PC-9 (cell line): ENCODE measurements at regions of chr3 and their contacts with region 1.

Region 1: DNA sequence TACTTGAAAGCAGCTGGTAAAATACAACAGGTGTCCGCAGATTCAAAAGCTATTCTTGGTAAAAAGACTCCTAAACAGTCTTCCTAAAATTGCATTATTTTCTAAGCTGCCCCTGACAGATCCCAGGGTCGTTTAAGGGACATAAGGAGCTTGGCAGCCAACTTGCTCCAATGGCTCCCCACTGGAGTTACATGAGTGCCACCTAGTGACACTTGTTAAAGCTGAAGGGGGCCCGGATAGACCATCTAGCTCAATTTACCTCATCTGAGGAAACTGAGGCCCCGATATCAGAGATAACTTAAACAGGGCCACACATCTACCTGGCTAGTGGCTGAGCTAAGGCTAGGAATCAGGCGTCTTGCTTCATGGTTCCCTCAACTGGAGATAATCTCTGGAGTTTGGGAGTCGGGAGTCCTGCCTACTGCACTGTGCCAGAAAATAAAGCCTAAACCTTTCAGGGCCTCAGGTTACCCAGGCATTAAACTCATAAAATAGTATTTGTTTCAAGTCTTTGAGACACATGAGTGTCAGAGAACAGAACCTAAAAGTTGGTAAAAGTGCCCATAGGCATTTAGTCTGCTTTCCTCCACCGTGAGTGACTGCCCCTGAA is 6.5 kb upstream of the TBC1D23 start:
- DNase-seq: peak; percentile 53 to 67
- H3K4me3 ChIP-seq: no peak overlapping the region
- H3K27ac ChIP-seq: no peak overlapping the region
- H3K4me1 ChIP-seq: peaks cover 10% of the 10 kb centered on the region
- H3K27me3 ChIP-seq: no peaks in the 10 kb centered on the region
- CTCF ChIP-seq: peak; percentile 93

Region 2: DNA sequence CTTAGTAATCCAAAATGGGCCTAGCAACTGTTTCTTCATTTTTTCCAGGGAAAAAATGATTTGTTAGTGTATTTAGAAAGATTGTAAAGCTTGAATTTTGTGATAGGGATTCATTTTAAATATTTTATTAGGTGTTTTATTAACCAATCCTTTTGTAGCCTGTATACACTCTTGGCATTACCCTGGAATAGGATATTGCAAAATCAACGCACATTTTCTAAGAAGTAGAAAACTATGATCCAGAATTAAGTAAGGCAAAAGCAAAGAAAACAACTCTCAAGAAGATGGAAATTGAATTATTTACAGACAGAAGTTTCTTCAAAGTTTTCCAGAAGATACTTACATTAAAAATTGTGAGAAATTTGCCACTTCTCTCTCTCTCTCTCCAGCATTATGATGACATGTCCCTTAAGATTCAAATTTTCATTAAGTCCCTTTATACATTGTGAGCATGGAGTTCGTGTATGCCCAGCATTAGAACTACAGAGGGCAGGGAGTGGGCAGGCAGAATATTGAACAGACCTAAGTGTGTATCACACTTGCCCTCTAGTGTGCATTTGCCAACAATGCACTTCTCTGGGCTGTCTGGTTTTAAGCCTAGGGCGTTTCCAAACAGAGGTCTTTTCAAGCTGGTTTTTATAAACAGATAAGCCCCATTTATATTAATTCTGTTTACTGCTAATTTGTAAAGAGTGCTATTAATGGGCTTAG is 465.1 kb before region 1 on chr3:
- CTCF ChIA-PET with region 1: interaction called, 10 read pairs
- POLR2A ChIA-PET with region 1: no interaction called
- intact Hi-C with region 1: no loop called
- DNase-seq: peak; percentile 34 to 46
- H3K4me3 ChIP-seq: no peak overlapping the region
- H3K27ac ChIP-seq: no peak overlapping the region
- H3K4me1 ChIP-seq: no peaks in the 10 kb centered on the region
- H3K27me3 ChIP-seq: no peaks in the 10 kb centered on the region
- CTCF ChIP-seq: peak; percentile 89

Region 3: GRCh38 chr3:100002599-100003350 is 251.5 kb before region 1 on chr3:
- CTCF ChIA-PET with region 1: interaction called, 6 read pairs
- POLR2A ChIA-PET with region 1: no interaction called
- intact Hi-C with region 1: loop called (anchors 2 kb)
- DNase-seq: peak; percentile 79 to 100
- H3K4me3 ChIP-seq: no peak overlapping the region
- H3K27ac ChIP-seq: peak overlapping the region; percentile 60
- H3K4me1 ChIP-seq: peaks cover 57% of the 10 kb centered on the region
- H3K27me3 ChIP-seq: no peaks in the 10 kb centered on the region
- CTCF ChIP-seq: no peak

Region 4: DNA sequence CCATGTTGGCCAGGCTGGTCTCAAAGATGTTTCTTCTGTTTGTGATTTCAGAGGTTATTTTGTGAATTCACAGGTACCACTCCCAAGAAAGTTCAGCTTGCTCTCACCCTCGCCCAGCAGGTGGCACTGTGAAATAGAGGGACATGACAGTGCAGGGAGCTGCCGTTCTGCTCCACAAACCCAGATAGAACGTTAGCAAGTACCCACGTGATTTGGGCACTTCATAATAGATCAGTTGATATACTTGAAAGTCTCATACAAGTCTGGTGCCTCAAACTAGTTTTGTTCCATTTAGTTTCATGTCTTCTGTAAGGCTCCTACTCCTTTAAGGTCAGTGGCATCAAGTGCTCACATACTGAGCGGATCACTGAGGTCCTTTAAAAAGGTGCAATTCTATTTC is 185.4 kb before region 1 on chr3:
- CTCF ChIA-PET with region 1: interaction called, 45 read pairs
- POLR2A ChIA-PET with region 1: no interaction called
- intact Hi-C with region 1: loop called (anchors 1 kb)
- DNase-seq: peak; percentile 46 to 73
- H3K4me3 ChIP-seq: no peak overlapping the region
- H3K27ac ChIP-seq: no peak overlapping the region
- H3K4me1 ChIP-seq: no peaks in the 10 kb centered on the region
- H3K27me3 ChIP-seq: no peaks in the 10 kb centered on the region
- CTCF ChIP-seq: peak; percentile 81

Region 5: GRCh38 chr3:100184948-100185570 is 69.2 kb before region 1 on chr3:
- CTCF ChIA-PET with region 1: interaction called, 10 read pairs
- POLR2A ChIA-PET with region 1: no interaction called
- intact Hi-C with region 1: loop called (anchors 10 kb)
- DNase-seq: no peak
- H3K4me3 ChIP-seq: no peak overlapping the region
- H3K27ac ChIP-seq: no peak overlapping the region
- H3K4me1 ChIP-seq: no peaks in the 10 kb centered on the region; the same call in 1 of the 2 replicates
- H3K27me3 ChIP-seq: no peaks in the 10 kb centered on the region
- CTCF ChIP-seq: no peak